ENCODE measurements at regions of chr4 and their contacts with region 1.

Region 1: DNA sequence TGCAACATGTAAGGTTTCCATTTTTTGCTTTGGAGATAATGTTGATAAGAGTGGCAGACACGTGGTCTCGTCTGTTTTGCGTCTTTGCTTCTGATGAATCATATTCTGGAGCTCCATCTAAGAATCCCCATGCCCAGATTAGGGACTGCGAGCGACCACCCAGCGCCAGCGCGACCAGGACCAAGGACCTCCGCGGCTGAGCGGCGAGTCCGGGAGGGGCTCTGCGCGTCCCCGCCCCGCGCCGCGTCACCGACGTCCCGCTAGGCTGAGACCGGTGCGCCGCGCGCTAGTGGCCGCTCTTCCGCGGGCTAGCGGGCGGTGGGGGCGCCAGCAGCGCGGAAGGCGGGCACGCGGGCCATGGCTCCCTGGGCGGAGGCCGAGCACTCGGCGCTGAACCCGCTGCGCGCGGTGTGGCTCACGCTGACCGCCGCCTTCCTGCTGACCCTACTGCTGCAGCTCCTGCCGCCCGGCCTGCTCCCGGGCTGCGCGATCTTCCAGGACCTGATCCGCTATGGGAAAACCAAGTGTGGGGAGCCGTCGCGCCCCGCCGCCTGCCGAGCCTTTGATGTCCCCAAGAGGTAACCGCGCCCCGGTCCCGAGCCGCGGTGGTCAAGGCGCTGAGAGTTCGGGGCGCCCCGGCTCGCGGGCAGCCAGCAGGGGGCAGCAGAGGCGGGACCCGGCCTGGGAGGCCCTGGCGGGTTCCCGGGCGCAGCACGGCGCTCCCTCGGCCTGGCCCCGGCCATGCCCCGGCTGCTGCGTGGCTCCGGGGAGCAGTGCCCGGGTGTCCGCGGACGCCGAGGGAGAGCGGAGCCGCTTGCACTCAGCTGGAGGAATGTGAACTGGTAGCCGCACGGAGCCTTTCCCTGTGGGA is at the start of gene SRD5A3:
- DNase-seq: peak; percentile 71
- H3K4me3 Mint-ChIP-seq: peak within 1 kb of the TSS; percentile 80
- H3K27ac Mint-ChIP-seq: peak within 1 kb of the TSS; percentile 87
- H3K4me1 Mint-ChIP-seq: peaks cover 23% of the 10 kb centered on the region
- H3K27me3 Mint-ChIP-seq: no peaks in the 10 kb centered on the region
- total RNA-seq, gene SRD5A3: 8.3 to 10.3 TPM

Region 2: DNA sequence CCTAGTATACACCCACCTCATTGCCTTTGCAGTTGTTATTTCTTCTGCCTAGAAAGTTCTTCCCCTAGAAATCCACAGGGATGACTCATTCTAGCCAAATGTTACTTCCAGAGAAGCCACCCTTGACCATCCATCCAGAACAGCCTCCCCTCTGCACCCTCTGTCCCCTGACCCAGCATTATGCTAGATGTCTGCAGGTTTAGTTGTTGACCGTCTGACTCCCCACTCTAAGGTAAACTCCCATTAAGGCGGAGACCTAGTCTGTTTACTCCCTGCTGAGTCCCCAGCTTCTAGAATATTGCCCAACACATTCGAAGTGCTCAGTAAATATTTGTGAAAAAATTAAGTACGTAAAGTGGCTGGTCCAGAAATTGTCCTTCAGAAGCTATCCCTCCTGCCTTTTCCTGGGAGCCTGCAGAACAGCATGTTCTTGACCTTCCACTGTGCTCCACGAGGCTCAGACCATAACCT is 10.8 kb after region 1 on chr4:
- CTCF ChIA-PET with region 1: interaction called, 22 read pairs
- POLR2A ChIA-PET with region 1: no interaction called
- DNase-seq: no peak
- H3K4me3 Mint-ChIP-seq: no peak overlapping the region
- H3K27ac Mint-ChIP-seq: no peak overlapping the region
- H3K4me1 Mint-ChIP-seq: peaks cover 2% of the 10 kb centered on the region
- H3K27me3 Mint-ChIP-seq: no peaks in the 10 kb centered on the region

Region 3: GRCh38 chr4:55363691-55364351 is 17.6 kb after region 1 on chr4:
- CTCF ChIA-PET with region 1: interaction called, 10 read pairs
- POLR2A ChIA-PET with region 1: no interaction called
- DNase-seq: no peak
- H3K4me3 Mint-ChIP-seq: no peak overlapping the region
- H3K27ac Mint-ChIP-seq: no peak overlapping the region
- H3K4me1 Mint-ChIP-seq: peaks cover 2% of the 10 kb centered on the region
- H3K27me3 Mint-ChIP-seq: no peaks in the 10 kb centered on the region

Region 4: GRCh38 chr4:55395529-55396307 is 49.5 kb after region 1 on chr4 and contains the start of gene TMEM165:
- CTCF ChIA-PET with region 1: interaction called, 10 read pairs
- POLR2A ChIA-PET with region 1: no interaction called
- DNase-seq: peak; percentile 91
- H3K4me3 Mint-ChIP-seq: peak within 1 kb of the TSS; percentile 89
- H3K27ac Mint-ChIP-seq: peak within 1 kb of the TSS; percentile 95
- H3K4me1 Mint-ChIP-seq: peaks cover 43% of the 10 kb centered on the region
- H3K27me3 Mint-ChIP-seq: no peaks in the 10 kb centered on the region
- total RNA-seq, gene TMEM165: 61.8 to 61.9 TPM